BJ (cell line): ENCODE measurements at regions of chr16 and their contacts with region 1.

Region 1: DNA sequence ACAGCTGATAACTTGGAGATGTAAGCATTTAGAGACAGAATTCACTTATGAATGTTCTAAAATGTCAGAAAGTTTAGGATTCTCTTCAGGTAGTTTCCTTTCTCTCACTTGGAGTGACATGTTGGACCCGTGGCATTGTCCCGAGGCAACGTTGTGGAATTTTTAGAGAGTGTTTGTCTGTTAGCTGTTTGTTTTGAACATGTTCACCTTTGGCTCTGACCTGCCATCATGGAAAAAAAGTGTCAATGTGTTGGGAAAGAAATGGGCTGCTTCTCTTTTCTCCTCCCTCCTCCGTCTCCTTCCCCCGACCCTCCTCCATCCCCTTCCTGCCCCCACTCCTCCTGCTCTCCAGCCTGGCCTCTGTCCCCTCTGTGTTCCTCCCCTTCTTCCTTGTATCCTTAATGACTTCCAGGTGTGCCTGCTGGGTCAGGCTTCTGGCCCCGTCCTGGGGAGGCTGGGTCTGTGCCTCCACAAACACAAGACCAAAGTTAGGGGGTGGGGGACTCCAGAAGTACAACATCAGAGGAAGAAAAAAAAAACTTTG is 463.1 kb downstream of the MAF start:
- DNase-seq: no peak
- H3K4me3 ChIP-seq: no peak overlapping the region
- H3K27me3 ChIP-seq: no peaks in the 10 kb centered on the region
- CTCF ChIP-seq: no peak

Region 2: GRCh38 chr16:79253100-79253631 is 115.7 kb after region 1 on chr16:
- CTCF ChIA-PET with region 1: no interaction called
- POLR2A ChIA-PET with region 1: interaction called, 12 read pairs
- DNase-seq: no peak
- H3K4me3 ChIP-seq: no peak overlapping the region
- H3K27me3 ChIP-seq: no peaks in the 10 kb centered on the region
- CTCF ChIP-seq: no peak